ENCODE measurements at regions of chr14 and their contacts with region 1.

Region 1: GRCh38 chr14:89178802-89179535 is 238.1 kb downstream of the FOXN3 start:
- DNase-seq: no peak
- ATAC-seq: no peak
- H3K4me3 Mint-ChIP-seq: no peak overlapping the region
- H3K27ac Mint-ChIP-seq: no peak overlapping the region
- H3K4me1 Mint-ChIP-seq: peaks cover 6% of the 10 kb centered on the region
- H3K27me3 Mint-ChIP-seq: no peaks in the 10 kb centered on the region

Region 2: GRCh38 chr14:89165189-89166181 is 13.5 kb before region 1 on chr14:
- CTCF ChIA-PET with region 1: interaction called, 11 read pairs
- DNase-seq: peak; percentile 45
- ATAC-seq: peak; percentile 58
- H3K4me3 Mint-ChIP-seq: peak overlapping the region; percentile 28
- H3K27ac Mint-ChIP-seq: peak overlapping the region; percentile 64
- H3K4me1 Mint-ChIP-seq: peaks cover 17% of the 10 kb centered on the region
- H3K27me3 Mint-ChIP-seq: no peaks in the 10 kb centered on the region